Prostate gland (tissue), 2 donors: ENCODE measurements at regions of chr1 and their contacts with region 1.

Region 1: DNA sequence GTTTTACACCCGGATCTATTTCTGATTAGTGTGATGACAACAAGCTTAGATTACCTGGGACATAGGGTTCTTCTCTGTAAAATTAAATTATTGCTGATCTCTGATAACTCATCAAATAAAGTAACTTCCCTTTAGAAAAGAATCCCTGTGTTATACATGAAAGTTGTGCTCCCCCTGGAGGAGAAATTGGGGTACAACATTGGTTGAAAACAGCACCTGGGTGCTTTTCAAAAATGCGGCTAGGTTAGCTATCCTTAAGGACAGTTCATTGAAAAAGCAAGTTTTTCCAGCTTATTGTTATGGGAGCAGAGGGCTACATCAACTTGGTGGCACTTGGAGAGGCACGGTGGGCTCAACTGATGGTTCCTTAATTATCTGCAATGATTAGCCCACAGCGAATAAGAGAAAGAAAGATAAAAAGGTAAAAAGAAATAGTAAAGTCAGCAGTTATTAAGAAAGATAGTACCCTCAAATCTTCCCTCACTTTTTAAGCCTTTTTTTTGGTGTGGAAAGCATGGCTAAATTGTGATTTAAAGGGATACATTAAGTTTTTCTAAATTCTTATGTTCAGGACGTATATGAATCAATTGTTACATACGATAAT is 97.8 kb downstream of the FMN2 start:
- DNase-seq: no peak
- H3K4me3 ChIP-seq: no peak overlapping the region
- H3K27ac ChIP-seq: no peak overlapping the region
- H3K4me1 ChIP-seq: no peaks in the 10 kb centered on the region
- H3K27me3 ChIP-seq: peaks cover 2% of the 10 kb centered on the region
- CTCF ChIP-seq: peak in 2 of 4 experiments; percentile 30 to 58
- POLR2A ChIP-seq: no peak

Region 2: DNA sequence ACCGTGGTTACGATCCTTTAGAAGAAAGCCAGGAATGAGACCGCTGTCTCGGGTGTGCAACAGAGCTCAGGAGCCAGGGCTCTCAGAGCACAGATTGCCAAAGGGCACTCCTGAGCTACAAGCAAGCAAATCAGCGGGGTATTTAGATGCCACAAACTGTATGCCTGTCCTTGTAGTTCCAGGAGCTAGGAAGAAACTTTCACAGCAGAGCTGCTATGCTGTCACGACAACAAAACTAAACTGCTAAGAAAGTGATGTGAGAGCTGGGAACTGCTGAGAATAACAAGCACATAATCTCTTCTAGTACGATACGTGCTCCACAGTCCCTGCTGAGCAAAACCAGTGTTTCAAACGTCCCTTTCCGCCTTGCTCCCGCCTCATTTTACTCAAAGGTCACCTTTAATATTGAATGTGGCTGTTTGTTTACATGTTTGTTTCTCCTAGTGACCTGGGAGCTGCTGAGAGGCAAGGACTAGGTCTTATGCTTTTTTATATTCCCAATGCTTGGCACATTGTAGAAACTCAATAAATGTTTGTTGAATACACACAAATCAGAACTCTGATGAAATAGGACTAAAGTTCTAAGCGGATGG is 407.8 kb after region 1 on chr1:
- intact Hi-C with region 1: loop called (anchors 10 kb)
- DNase-seq: no peak
- H3K4me3 ChIP-seq: peak overlapping the region; percentile 7 to 12
- H3K27ac ChIP-seq: peak overlapping the region; percentile 58 to 59
- H3K4me1 ChIP-seq: no peaks in the 10 kb centered on the region
- H3K27me3 ChIP-seq: no peaks in the 10 kb centered on the region
- CTCF ChIP-seq: no peak
- POLR2A ChIP-seq: no peak

Region 3: DNA sequence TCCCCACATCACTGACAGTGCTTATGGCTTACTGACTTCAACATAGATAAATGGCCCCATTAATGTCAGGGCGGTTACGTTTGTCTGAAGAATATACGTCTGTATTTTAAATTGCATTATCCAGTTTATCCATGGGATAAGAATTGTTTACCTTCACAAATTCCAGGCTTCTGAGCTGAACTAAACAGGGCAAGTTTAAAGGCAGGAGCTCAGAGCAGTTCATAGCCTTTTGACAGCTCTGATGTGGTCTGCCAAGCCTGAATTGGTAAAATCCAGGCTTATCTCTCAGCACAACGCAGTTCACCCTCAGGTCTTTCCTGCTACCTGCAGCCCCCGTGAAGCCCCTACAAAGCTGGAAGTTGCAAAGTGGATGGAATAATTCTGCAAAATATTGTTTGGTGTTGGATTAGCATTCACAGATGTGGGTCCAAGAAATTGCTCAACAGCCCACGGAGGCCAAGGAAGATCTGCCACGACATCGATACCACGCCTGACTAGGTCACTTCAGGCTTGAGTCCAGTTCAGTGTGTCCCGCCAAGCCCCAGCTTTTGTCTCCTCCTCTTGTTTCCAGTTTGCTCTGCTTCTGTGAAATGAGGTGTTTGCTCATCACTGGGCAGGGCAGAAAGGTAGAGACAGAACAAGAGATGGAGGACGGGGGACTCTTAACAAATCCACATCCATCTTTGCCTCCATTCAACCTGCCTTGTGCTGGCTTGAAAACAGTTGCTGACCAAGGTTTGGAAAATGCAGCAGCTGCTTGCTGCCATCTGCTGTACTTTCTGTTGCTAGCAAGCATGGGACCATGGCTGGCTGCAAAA is 502.2 kb after region 1 on chr1:
- intact Hi-C with region 1: loop called (anchors 5 kb)
- DNase-seq: no peak
- H3K4me3 ChIP-seq: no peak overlapping the region
- H3K27ac ChIP-seq: no peak overlapping the region
- H3K4me1 ChIP-seq: no peaks in the 10 kb centered on the region
- H3K27me3 ChIP-seq: no peaks in the 10 kb centered on the region
- CTCF ChIP-seq: peak in 3 of 4 experiments; percentile 35 to 70 (median 52)
- POLR2A ChIP-seq: no peak